Activated CD4-positive, alpha-beta memory T cell treated with anti-CD3 and anti-CD28 coated beads for 36 hours (primary cell): ENCODE measurements at regions of chr18 and their contacts with region 1.

Region 1: DNA sequence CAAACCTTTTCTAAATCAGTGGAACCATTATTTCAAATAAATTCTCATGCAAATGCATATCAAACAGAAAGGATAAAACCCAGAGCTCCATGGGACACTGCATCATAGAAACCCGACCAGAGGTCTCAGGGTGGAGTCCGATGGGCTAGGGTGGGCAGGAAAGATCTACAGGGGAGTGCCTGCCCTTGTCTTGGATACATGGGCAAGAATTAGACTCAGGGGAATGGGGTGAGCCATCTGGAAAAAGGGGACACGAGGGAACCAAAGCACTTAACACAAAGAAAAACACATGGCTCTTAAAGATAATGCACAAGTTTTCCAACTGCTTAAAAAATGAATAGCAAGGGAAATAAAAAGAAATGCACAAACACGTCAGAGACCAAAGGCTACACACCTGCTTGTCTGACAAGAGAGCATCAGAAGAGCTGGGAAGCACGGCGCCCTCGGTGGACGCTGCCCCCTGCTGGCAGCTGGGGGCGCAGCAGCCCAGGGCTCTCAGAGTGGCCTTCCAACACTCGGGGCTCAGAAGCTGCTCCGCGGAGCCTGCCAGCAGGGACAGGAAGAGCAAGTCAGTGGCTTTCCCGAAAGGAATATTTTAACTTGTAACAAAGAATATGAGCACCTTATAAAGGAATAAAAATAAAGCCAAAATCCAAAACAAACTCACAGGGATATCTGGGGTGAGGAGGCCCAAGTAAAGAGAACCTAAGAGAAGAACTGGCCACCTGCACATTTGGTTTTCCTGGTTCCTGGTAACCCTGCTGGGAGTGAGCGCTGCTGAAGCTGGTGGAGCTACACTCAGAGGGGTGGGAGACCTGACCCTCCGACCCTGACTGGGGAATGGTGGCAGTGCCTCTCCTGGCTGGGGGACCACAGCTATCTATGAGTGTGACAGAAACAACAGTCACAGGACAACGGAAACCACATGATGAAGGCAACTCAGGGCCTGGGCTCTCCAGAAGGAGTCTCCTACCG is 54.5 kb downstream of the SIGLEC15 start:
- DNase-seq: peak; percentile 81
- H3K4me3 Mint-ChIP-seq: no peak overlapping the region
- H3K27ac Mint-ChIP-seq: no peak overlapping the region
- H3K4me1 Mint-ChIP-seq: peaks cover 14% of the 10 kb centered on the region
- H3K27me3 Mint-ChIP-seq: no peaks in the 10 kb centered on the region

Region 2: DNA sequence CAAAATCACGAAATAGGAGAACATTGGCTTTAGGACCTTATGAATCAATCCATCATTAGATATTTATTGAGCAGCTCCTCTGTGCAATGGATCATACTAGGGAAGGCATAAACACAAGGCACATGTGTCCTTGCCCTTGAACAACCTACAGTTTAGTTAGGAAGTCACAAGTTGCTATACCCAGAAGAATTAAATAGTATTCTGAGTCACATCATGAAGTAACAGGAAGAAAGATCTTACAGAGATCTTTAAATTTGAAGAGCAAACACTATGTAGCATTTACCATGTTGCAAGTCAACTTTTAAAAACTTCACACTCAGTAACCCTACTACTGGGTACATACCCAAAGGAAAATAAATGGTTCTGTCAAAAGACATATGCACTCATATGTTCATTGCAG is 619.8 kb before region 1 on chr18:
- CTCF ChIA-PET with region 1: no interaction called
- POLR2A ChIA-PET with region 1: no interaction called
- intact Hi-C with region 1: no loop called
- DNase-seq: no peak
- H3K4me3 Mint-ChIP-seq: no peak overlapping the region
- H3K27ac Mint-ChIP-seq: no peak overlapping the region
- H3K4me1 Mint-ChIP-seq: no peaks in the 10 kb centered on the region
- H3K27me3 Mint-ChIP-seq: peaks cover 6% of the 10 kb centered on the region

Region 3: DNA sequence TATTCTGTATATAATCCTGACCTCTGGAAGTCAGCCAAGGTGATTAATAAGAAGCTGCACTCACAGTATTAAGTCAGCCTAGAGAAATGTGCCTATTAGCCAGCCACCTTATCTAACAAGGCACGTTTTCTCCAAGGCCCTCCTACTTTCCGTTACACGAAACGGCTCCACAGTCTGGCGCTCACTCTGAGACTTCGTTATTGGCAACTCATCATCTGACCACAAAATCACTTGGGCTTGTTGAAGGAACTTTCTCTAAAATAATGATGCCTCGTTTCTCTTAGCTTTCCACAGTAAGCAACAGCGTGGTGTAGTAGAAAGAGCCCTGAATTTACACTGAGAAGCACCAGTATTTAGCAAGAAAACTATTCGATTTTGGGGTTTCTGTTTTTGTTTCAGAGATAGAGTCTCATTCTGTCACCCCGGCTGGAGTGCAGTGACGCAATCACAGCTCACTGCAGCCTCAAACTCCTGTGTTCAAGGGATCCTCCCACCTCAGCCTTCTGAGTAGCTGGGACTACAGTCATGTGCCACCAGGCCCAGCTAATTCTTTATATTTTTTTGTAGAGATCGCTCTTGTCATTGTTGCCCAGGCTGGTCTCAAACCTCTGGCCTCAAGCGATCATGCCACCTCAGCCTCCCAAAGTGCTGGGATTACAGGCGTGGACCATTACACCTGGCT is 209.5 kb before region 1 on chr18:
- CTCF ChIA-PET with region 1: interaction called, 199 read pairs
- POLR2A ChIA-PET with region 1: no interaction called
- intact Hi-C with region 1: loop called (anchors 1 kb)
- DNase-seq: peak; percentile 70
- H3K4me3 Mint-ChIP-seq: peak overlapping the region; percentile 62
- H3K27ac Mint-ChIP-seq: peak overlapping the region; percentile 72
- H3K4me1 Mint-ChIP-seq: peaks cover 52% of the 10 kb centered on the region
- H3K27me3 Mint-ChIP-seq: no peaks in the 10 kb centered on the region

Region 4: GRCh38 chr18:45722899-45723298 is 157.1 kb before region 1 on chr18:
- CTCF ChIA-PET with region 1: interaction called, 126 read pairs
- POLR2A ChIA-PET with region 1: no interaction called
- intact Hi-C with region 1: loop called (anchors 1 kb)
- DNase-seq: peak; percentile 85
- H3K4me3 Mint-ChIP-seq: no peak overlapping the region
- H3K27ac Mint-ChIP-seq: no peak overlapping the region
- H3K4me1 Mint-ChIP-seq: no peaks in the 10 kb centered on the region
- H3K27me3 Mint-ChIP-seq: no peaks in the 10 kb centered on the region

Region 5: GRCh38 chr18:45829855-45830254 is 50.1 kb before region 1 on chr18:
- CTCF ChIA-PET with region 1: no interaction called
- POLR2A ChIA-PET with region 1: no interaction called
- intact Hi-C with region 1: no loop called
- DNase-seq: no peak
- H3K4me3 Mint-ChIP-seq: no peak overlapping the region
- H3K27ac Mint-ChIP-seq: no peak overlapping the region
- H3K4me1 Mint-ChIP-seq: peaks cover 14% of the 10 kb centered on the region
- H3K27me3 Mint-ChIP-seq: peaks cover 5% of the 10 kb centered on the region

Region 6: GRCh38 chr18:45891806-45892205 is 11.8 kb after region 1 on chr18:
- CTCF ChIA-PET with region 1: interaction called, 18 read pairs
- POLR2A ChIA-PET with region 1: no interaction called
- intact Hi-C with region 1: no loop called
- DNase-seq: no peak
- H3K4me3 Mint-ChIP-seq: no peak overlapping the region
- H3K27ac Mint-ChIP-seq: no peak overlapping the region
- H3K4me1 Mint-ChIP-seq: no peaks in the 10 kb centered on the region
- H3K27me3 Mint-ChIP-seq: no peaks in the 10 kb centered on the region

Region 7: GRCh38 chr18:45935591-45936335 is 55.8 kb after region 1 on chr18:
- CTCF ChIA-PET with region 1: interaction called, 10 read pairs
- POLR2A ChIA-PET with region 1: no interaction called
- intact Hi-C with region 1: loop called (anchors 2 kb)
- DNase-seq: no peak
- H3K4me3 Mint-ChIP-seq: no peak overlapping the region
- H3K27ac Mint-ChIP-seq: no peak overlapping the region
- H3K4me1 Mint-ChIP-seq: peaks cover 32% of the 10 kb centered on the region
- H3K27me3 Mint-ChIP-seq: no peaks in the 10 kb centered on the region